ENCODE measurements at regions of chr7 and their contacts with region 1.

Region 1: GRCh38 chr7:16982640-16983350 is 101.0 kb upstream of the AGR3 start:
- DNase-seq: peak in 6 of 9 donors; percentile 4 to 55 (median 34)
- ATAC-seq: peak; percentile 74
- H3K4me3 ChIP-seq: no peak overlapping the region
- H3K4me3 Mint-ChIP-seq: no peak overlapping the region
- H3K27ac ChIP-seq: no peak overlapping the region
- H3K27ac Mint-ChIP-seq: peak overlapping the region in 3 of 9 donors; percentile 1 to 51 (median 26)
- H3K4me1 ChIP-seq: no peaks in the 10 kb centered on the region
- H3K4me1 Mint-ChIP-seq: peaks cover 0 to 7% (median 4%) of the 10 kb centered on the region in 7 donors
- H3K27me3 ChIP-seq: peaks cover 0 to 5% of the 10 kb centered on the region in 2 donors
- H3K27me3 Mint-ChIP-seq: peaks cover 14 to 60% (median 25%) of the 10 kb centered on the region in 5 donors

Region 2: GRCh38 chr7:17144322-17144721 is 161.5 kb after region 1 on chr7:
- CTCF ChIA-PET with region 1: no interaction called
- POLR2A ChIA-PET with region 1: no interaction called
- intact Hi-C with region 1: loop called in 1 of 2 experiments (anchors 5 kb)
- DNase-seq: peak in 1 of 9 donors; percentile 69
- ATAC-seq: peak; percentile 82
- H3K4me3 ChIP-seq: peak overlapping the region; percentile 6
- H3K4me3 Mint-ChIP-seq: peak overlapping the region in 9 of 10 donors; percentile 26 to 85 (median 49)
- H3K27ac ChIP-seq: no peak overlapping the region
- H3K27ac Mint-ChIP-seq: peak overlapping the region in 8 of 9 donors; percentile 0 to 91 (median 55)
- H3K4me1 ChIP-seq: peaks cover 26 to 35% of the 10 kb centered on the region in 2 donors
- H3K4me1 Mint-ChIP-seq: peaks cover 21 to 57% (median 46%) of the 10 kb centered on the region in 7 donors
- H3K27me3 ChIP-seq: no peaks in the 10 kb centered on the region
- H3K27me3 Mint-ChIP-seq: no peaks in the 10 kb centered on the region

Region 3: DNA sequence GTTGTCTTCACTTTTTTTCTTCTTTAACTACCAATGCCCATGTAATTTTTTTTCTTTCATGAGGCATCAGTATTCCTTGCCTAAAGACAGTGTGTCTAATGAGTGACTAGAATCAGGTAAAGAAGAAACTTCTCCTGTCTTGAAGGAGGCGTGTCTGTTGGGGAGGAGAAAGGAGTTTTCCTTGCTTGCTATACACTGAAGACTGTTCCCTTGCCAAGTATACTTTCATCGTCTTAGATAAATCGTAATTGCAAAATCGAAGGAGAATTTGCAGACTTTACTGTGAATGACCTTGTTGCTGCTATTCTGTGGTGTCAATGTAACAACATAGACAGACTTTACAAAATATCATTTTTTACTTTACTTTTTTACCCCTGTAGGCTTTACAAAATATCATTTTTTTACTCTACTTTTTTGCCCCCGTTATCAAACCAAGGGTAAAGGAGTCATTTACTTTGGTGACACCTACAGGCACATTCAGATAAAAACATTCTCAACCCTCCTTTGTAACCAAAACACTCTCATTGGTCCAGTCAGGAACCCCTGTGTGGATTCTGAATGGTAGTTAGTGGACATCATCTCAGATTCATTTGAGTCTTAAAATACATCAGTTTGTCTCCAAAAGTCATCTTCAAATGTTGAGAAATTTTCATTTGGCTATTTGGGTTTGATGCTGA is 548.1 kb after region 1 on chr7:
- CTCF ChIA-PET with region 1: no interaction called
- POLR2A ChIA-PET with region 1: no interaction called
- intact Hi-C with region 1: loop called (anchors 1 to 2 kb)
- DNase-seq: peak in 3 of 9 donors; percentile 1 to 16 (median 7)
- ATAC-seq: no peak
- H3K4me3 ChIP-seq: no peak overlapping the region
- H3K4me3 Mint-ChIP-seq: no peak overlapping the region
- H3K27ac ChIP-seq: no peak overlapping the region
- H3K27ac Mint-ChIP-seq: no peak overlapping the region
- H3K4me1 ChIP-seq: no peaks in the 10 kb centered on the region
- H3K4me1 Mint-ChIP-seq: peaks cover 0 to 10% (median 0%) of the 10 kb centered on the region in 7 donors
- H3K27me3 ChIP-seq: no peaks in the 10 kb centered on the region
- H3K27me3 Mint-ChIP-seq: peaks cover 0 to 18% (median 8%) of the 10 kb centered on the region in 5 donors

Region 4: GRCh38 chr7:17646253-17646956 is 663.6 kb after region 1 on chr7:
- CTCF ChIA-PET with region 1: no interaction called
- POLR2A ChIA-PET with region 1: no interaction called
- intact Hi-C with region 1: loop called (anchors 1 to 2 kb)
- DNase-seq: no peak
- ATAC-seq: no peak
- H3K4me3 ChIP-seq: no peak overlapping the region
- H3K4me3 Mint-ChIP-seq: no peak overlapping the region
- H3K27ac ChIP-seq: no peak overlapping the region
- H3K27ac Mint-ChIP-seq: no peak overlapping the region
- H3K4me1 ChIP-seq: no peaks in the 10 kb centered on the region
- H3K4me1 Mint-ChIP-seq: no peaks in the 10 kb centered on the region
- H3K27me3 ChIP-seq: no peaks in the 10 kb centered on the region
- H3K27me3 Mint-ChIP-seq: peaks cover 4 to 29% (median 22%) of the 10 kb centered on the region in 5 donors